Activated CD4-positive, alpha-beta memory T cell treated with anti-CD3 and anti-CD28 coated beads, Interleukin-2, amount 10 ng/mL, durations not matched to agents 7 days and 5 days (primary cell): ENCODE measurements at regions of chr10 and their contacts with region 1.

Region 1: DNA sequence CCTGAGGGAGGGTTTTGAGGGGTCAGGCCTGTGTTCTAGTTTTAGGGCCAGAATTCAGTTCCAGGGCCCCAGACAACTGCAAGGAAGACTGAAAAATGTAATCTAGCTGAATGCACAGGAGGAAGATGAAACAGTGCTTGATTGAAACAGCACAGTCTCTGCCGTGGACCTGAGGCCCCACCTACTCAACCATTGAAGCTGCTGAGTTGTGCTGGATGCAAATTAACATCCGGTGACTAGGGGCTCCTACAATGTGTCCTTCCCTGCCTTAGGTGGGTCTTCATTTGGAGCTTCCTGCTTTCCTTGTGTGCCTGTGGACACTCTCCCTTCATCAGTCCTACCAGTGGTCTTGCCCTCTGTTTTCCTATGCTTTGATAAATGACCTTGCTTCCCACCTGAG is 5.7 kb downstream of the GLRX3 start:
- DNase-seq: peak; percentile 36
- H3K4me3 Mint-ChIP-seq: no peak overlapping the region
- H3K27ac Mint-ChIP-seq: peak overlapping the region; percentile 34
- H3K4me1 Mint-ChIP-seq: peaks cover 67% of the 10 kb centered on the region
- H3K27me3 Mint-ChIP-seq: no peaks in the 10 kb centered on the region

Region 2: DNA sequence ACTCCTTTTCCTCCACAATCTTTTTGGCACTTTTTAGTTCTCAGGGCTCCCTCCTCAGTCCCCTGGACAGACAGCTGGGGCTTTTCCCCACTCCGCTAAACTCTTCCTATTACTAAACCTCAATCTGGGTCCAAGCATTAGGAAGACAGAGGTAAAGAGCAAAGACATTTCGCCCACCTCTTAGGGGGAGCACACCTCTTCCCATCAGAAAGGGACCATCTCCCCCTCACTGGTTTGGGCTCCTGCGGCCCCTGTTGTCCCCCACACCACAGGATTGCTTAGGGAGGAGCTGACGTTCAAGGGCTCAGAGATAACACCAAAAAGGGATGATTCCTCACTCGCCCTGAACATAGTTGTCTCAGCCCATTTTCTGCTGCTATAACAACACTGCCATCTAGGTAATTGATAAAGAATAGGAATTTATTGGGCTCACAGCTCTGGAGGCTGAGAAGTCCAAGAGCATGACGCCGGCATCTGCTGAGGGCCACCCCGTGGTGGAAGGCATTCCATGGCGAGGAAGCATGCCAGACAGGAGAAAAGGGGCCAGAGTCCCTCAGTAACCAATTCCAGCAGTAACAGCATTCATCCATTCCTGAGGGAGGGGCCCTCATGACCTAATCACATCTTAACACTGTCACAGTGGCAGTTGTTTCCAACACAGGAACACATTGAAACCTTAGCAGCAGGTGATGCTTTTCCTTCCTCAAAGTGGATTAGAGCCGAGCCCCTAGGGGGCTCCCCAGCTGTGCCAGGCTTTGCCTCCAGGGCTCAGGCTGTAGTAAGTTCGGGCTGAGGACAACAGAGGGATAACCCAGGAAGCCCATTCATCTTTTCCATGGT is 387.4 kb before region 1 on chr10:
- CTCF ChIA-PET with region 1: no interaction called
- POLR2A ChIA-PET with region 1: no interaction called
- DNase-seq: no peak
- H3K4me3 Mint-ChIP-seq: no peak overlapping the region
- H3K27ac Mint-ChIP-seq: no peak overlapping the region
- H3K4me1 Mint-ChIP-seq: peaks cover 6% of the 10 kb centered on the region
- H3K27me3 Mint-ChIP-seq: no peaks in the 10 kb centered on the region

Region 3: DNA sequence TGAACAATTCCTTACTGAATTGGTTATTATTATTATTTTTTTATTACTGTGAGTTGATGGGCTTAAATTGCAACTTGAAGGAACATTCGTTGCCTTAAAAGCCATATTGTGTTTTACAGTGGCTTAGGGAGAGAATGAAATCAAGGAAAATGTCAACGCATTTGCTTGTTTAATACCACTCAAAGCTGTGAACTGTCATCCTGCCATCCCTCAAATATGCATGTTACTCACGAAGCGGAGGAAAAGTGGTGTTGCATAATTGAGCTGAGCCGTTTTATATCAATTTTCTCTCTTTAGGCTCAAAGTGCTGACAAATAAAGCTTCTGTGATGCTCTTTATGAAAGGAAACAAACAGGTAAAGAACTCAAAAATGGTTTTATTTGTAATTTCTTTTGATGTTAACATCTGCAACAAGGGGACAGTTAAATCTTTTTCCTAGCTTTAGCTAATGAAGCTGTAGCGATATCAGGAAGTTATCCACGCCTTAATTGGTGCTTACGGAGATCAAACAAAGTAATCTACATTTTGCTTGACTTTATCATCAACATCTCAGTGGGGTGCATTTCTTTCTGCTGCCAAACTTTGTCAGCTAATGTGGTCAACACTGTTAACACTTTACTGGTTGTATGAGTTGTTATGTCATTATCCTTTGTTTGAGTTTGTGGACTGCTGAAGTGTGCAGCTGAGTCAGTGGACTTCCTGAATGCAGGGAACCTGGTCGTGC is 27.4 kb after region 1 on chr10:
- CTCF ChIA-PET with region 1: no interaction called
- POLR2A ChIA-PET with region 1: interaction called, 12 read pairs
- DNase-seq: no peak
- H3K4me3 Mint-ChIP-seq: no peak overlapping the region
- H3K27ac Mint-ChIP-seq: peak overlapping the region; percentile 40
- H3K4me1 Mint-ChIP-seq: peaks cover 49% of the 10 kb centered on the region
- H3K27me3 Mint-ChIP-seq: no peaks in the 10 kb centered on the region